ENCODE measurements at regions of chr3 and their contacts with region 1.

Region 1: DNA sequence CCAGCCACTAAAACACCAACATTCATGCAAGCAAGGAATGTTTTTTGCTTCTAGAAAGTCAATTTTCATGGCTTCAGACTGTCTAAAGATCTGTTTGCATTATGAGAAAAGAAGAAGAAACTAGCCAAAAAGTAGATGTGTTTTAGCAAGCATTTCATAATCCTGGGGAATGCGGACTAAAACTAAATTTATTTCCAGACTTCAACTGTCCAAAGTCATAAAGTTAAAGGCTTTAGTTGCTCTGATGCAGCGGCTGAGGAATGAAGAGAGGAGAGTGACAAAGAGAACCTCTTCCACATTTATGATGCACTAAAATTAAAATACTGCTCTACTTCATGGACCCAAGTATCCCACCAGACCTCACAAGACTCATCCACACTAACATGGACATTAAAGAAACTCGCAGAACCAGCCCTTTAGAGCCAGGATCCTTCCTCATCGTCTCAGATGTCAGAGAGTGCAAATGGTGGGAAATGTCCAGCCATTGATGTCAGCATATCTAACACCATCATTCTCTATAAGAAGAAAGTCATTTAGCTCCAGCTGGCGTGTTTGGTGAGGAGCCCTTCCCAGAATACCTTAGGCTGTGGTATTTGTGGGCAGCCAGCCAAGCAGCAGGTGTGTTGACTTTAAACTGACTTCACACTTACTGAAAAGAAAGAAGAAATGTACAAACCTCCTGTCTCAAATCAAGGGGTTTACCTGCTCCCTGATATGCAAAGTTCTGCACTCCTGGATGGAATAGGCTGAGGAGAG is 17.4 kb downstream of the FYCO1 start:
- DNase-seq: peak; percentile 81
- ATAC-seq: peak; percentile 55
- H3K4me3 Mint-ChIP-seq: peak overlapping the region; percentile 56
- H3K27ac Mint-ChIP-seq: peak overlapping the region; percentile 88
- H3K4me1 Mint-ChIP-seq: peaks cover 91% of the 10 kb centered on the region
- H3K27me3 Mint-ChIP-seq: no peaks in the 10 kb centered on the region

Region 2: GRCh38 chr3:45964139-45964538 is 14.0 kb before region 1 on chr3:
- CTCF ChIA-PET with region 1: interaction called, 36 read pairs
- POLR2A ChIA-PET with region 1: interaction called, 16 read pairs
- DNase-seq: peak; percentile 59
- ATAC-seq: peak; percentile 50
- H3K4me3 Mint-ChIP-seq: peak overlapping the region; percentile 9
- H3K27ac Mint-ChIP-seq: peak overlapping the region; percentile 87
- H3K4me1 Mint-ChIP-seq: peaks cover 91% of the 10 kb centered on the region
- H3K27me3 Mint-ChIP-seq: no peaks in the 10 kb centered on the region

Region 3: GRCh38 chr3:46017720-46018119 is 39.5 kb after region 1 on chr3:
- CTCF ChIA-PET with region 1: no interaction called
- POLR2A ChIA-PET with region 1: no interaction called
- DNase-seq: peak; percentile 17
- ATAC-seq: no peak
- H3K4me3 Mint-ChIP-seq: no peak overlapping the region
- H3K27ac Mint-ChIP-seq: no peak overlapping the region
- H3K4me1 Mint-ChIP-seq: peaks cover 43% of the 10 kb centered on the region
- H3K27me3 Mint-ChIP-seq: peaks cover 2% of the 10 kb centered on the region

Measured in activated CD8-positive, alpha-beta T cell treated with anti-CD3 and anti-CD28 coated beads, Interleukin-2, amount 10 ng/mL, durations not matched to agents 7 days and 5 days (primary cell).